ENCODE measurements at regions of chr1 and their contacts with region 1.

Region 1: GRCh38 chr1:114716304-114717170 is at the start of gene NRAS:
- DNase-seq: peak; percentile 95 to 97 (median 96)
- ATAC-seq: peak; percentile 98 to 100 (median 100)
- H3K4me3 ChIP-seq: peak within 1 kb of the TSS; percentile 61 to 94 (median 83)
- H3K27ac ChIP-seq: peak within 1 kb of the TSS; percentile 37 to 96 (median 88)
- H3K4me1 ChIP-seq: peaks cover 0 to 38% (median 19%) of the 10 kb centered on the region in 12 donors
- H3K27me3 ChIP-seq: no peaks in the 10 kb centered on the region
- CTCF ChIP-seq: no peak
- POLR2A ChIP-seq: peak in 1 of 2 donors; percentile 57
- total RNA-seq, gene NRAS: 7.1 to 25.7 (median 10.2) TPM

Region 2: DNA sequence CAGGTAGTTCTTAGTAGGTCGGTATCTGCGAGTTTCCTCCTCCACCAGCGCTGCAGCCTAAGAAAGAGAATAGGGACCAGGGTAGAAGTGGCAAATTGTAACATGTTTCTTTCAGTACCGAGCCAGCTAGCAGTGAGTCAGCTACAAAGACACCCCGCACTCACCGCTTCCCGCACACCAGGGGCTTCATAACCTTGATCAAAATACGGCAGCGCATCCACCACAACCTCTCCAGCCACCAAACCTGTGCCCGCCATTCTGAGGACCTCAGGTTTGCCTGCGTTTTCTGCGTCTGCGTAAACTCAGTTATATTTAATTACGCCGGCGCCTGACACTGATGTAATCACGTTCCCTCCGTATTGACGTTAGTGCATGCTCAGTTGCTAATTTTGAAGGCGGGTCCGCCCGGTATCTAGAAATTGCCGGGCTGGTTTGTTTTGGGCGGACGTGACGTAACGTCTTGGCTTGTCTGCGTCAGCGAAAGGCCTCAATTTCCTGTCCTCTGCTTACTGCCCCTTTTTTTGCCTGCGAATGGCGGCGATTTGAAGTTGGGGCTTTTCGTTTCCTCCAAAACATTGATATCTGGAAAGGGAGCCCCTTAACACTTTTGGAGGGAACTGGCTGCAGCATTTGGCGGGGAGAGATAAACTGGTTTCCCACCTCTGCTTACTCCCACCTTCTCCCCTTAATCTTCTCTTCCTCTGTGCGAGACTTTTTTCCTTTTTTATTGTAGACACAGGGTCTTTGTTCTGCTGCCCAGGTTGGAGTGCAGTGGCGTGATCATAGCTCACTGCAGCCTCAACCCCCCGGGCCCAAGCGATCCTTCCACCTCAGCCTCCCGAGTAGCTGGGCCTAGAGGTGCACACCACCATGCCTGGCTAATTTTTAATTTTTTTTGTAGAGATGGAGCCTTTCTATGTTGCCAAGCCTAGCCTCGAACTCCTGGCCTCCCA is 134.9 kb before region 1 on chr1 and contains the start of gene BCAS2:
- intact Hi-C with region 1: loop called in 5 of 10 experiments (anchors 2 to 10 kb)
- DNase-seq: peak; percentile 95 to 98 (median 97)
- ATAC-seq: peak; percentile 98 to 99 (median 99)
- H3K4me3 ChIP-seq: peak within 1 kb of the TSS; percentile 41 to 89 (median 68)
- H3K27ac ChIP-seq: peak within 1 kb of the TSS; percentile 68 to 95 (median 88)
- H3K4me1 ChIP-seq: peaks cover 0 to 37% (median 22%) of the 10 kb centered on the region in 12 donors
- H3K27me3 ChIP-seq: no peaks in the 10 kb centered on the region
- CTCF ChIP-seq: no peak
- POLR2A ChIP-seq: peak in 1 of 2 donors; percentile 88
- total RNA-seq, gene BCAS2: 28.7 to 41.6 (median 34.4) TPM

Region 3: DNA sequence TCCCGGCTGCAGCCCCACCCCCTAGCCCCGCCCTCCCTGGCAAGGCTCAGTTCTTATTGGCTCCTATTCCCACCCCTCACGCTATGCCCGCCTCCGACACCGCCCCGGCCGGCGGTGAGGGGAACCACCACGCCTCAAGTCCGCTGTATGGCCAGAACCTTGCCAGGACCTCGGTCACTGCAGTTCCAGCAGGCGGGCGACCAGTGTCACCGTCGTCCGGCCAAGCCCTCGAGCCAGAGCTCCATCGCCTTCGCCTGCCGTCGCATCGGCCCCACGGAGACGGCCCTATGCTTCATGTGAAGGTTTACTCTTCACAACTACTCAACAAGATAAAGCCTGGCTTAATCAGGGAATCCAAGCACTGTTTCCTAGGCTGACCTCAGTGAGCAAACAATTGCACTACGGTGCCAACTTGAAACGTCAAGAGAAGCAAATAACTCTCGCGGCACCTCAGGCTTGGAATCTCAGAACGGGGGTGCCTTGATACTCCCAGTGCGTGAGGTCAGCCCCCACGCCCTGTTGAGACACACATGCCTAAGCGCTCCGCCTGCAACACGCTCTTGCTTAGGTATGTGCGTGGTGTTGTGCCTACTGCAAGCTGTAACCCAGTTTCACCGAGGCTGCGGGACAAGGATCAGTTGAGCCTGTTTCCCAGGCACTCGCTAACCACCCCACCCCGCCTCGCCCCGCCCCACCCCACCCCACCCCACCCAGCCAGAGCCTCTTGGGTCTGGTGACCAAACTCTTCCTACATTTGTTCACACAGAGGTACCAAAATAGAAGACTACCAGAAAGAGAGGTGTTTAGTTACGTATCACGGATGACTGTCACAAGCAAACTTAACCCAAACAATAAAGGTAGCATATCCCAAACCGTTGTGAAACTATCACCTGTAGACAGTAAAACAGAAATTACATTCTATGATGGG is 46.2 kb before region 1 on chr1:
- intact Hi-C with region 1: loop called in 1 of 10 experiments (anchors 5 kb)
- DNase-seq: peak; percentile 95 to 96 (median 95)
- ATAC-seq: peak; percentile 99 to 100 (median 100)
- H3K4me3 ChIP-seq: peak overlapping the region; percentile 45 to 96 (median 76)
- H3K27ac ChIP-seq: peak overlapping the region in 11 of 12 donors; percentile 70 to 91 (median 83)
- H3K4me1 ChIP-seq: peaks cover 0 to 17% (median 4%) of the 10 kb centered on the region in 12 donors
- H3K27me3 ChIP-seq: peaks cover 0 to 4% (median 0%) of the 10 kb centered on the region in 9 donors
- CTCF ChIP-seq: peak in 8 of 12 donors; percentile 8 to 35 (median 23)
- POLR2A ChIP-seq: peak; percentile 49 to 87

Region 4: GRCh38 chr1:114750780-114751179 is 34.2 kb after region 1 on chr1:
- intact Hi-C with region 1: loop called in 4 of 10 experiments (anchors 2 to 5 kb)
- DNase-seq: no peak
- ATAC-seq: peak in 2 of 4 donors; percentile 4 to 23
- H3K4me3 ChIP-seq: no peak overlapping the region
- H3K27ac ChIP-seq: peak overlapping the region in 6 of 12 donors; percentile 19 to 52 (median 32)
- H3K4me1 ChIP-seq: peaks cover 28 to 100% (median 93%) of the 10 kb centered on the region in 12 donors
- H3K27me3 ChIP-seq: no peaks in the 10 kb centered on the region
- CTCF ChIP-seq: no peak
- POLR2A ChIP-seq: no peak

Region 5: GRCh38 chr1:114757455-114758250 is 41.1 kb after region 1 on chr1 and contains the start of gene CSDE1:
- intact Hi-C with region 1: loop called in 4 of 10 experiments (anchors 2 to 5 kb)
- DNase-seq: peak; percentile 97 to 98 (median 98)
- ATAC-seq: peak; percentile 96 to 97 (median 97)
- H3K4me3 ChIP-seq: peak within 1 kb of the TSS; percentile 81 to 99 (median 92)
- H3K27ac ChIP-seq: peak within 1 kb of the TSS; percentile 92 to 100 (median 99)
- H3K4me1 ChIP-seq: peaks cover 18 to 52% (median 41%) of the 10 kb centered on the region in 12 donors
- H3K27me3 ChIP-seq: no peaks in the 10 kb centered on the region
- CTCF ChIP-seq: peak in 11 of 12 donors; percentile 16 to 59 (median 40)
- POLR2A ChIP-seq: peak in 1 of 2 donors; percentile 90
- total RNA-seq, gene CSDE1: 714 to 1,317 (median 905) TPM

Region 6: GRCh38 chr1:114780344-114781226 is 64.0 kb after region 1 on chr1 and contains the start of gene SIKE1:
- intact Hi-C with region 1: loop called in 2 of 10 experiments (anchors 2 kb)
- DNase-seq: peak; percentile 89 to 96 (median 95)
- ATAC-seq: peak; percentile 89 to 99 (median 99)
- H3K4me3 ChIP-seq: peak within 1 kb of the TSS; percentile 54 to 98 (median 79)
- H3K27ac ChIP-seq: peak within 1 kb of the TSS; percentile 5 to 92 (median 90)
- H3K4me1 ChIP-seq: peaks cover 0 to 16% (median 12%) of the 10 kb centered on the region in 12 donors
- H3K27me3 ChIP-seq: peaks cover 0 to 2% (median 0%) of the 10 kb centered on the region in 9 donors
- CTCF ChIP-seq: peak in 2 of 12 donors; percentile 29 to 33
- POLR2A ChIP-seq: peak in 1 of 2 donors; percentile 86
- total RNA-seq, gene SIKE1: 22.1 to 41.7 (median 34.2) TPM